ENCODE measurements at regions of chr16 and their contacts with region 1.

Region 1: DNA sequence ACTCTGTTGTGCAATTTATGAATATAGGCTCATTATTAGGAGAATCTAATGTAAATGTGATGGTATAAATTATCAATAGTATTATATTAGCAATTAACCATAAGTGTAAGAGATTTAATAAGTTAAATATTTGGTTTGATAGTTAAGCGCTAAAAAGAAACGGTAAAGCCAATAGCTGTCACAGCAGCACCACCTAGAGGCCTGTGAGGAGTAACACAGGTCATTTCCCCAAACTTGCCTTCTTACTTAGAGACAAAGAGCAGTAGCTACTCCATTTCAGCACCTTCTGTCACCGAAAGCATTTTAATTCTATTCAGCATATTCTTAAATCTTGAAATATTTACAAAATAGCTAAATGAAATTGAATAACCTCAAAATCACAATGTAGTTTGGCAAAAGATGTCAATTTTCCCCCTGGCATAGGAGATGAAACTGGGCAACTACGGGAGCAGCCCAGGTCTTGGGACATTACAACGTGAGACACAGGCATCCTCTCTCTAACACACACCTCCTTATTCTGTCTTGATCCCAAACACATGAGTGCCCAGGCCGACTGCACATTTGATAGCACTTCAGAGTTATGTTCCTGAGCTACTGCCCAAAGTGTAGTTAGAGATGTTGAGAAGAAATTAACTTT is 14.2 kb upstream of the DYNLRB2 start:
- H3K4me3 Mint-ChIP-seq: no peak overlapping the region
- H3K27ac Mint-ChIP-seq: no peak overlapping the region
- H3K4me1 Mint-ChIP-seq: no peaks in the 10 kb centered on the region
- H3K27me3 Mint-ChIP-seq: peaks cover 3% of the 10 kb centered on the region

Region 2: DNA sequence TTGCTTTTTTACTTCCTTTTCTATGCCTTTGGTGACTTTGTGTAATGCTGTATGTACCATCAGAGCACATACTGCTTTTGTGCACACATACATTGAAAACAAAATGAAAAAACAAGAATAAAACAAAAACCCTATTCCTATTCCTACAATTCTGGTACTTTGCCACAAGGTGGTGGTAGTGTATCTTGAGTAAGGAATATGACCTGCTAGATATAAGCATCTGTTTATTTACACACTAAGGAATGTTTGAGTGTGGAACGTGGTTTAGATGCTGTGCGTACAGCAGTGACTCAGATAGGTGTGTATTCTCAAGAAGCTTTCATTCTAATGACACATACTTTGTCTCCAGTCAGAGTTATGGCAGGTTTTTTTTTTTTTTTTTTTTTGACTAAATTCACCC is 1820.8 kb before region 1 on chr16:
- intact Hi-C with region 1: loop called (anchors 5 kb)
- H3K4me3 Mint-ChIP-seq: no peak overlapping the region
- H3K27ac Mint-ChIP-seq: no peak overlapping the region
- H3K4me1 Mint-ChIP-seq: no peaks in the 10 kb centered on the region
- H3K27me3 Mint-ChIP-seq: no peaks in the 10 kb centered on the region

Region 3: GRCh38 chr16:80804056-80804450 is 277.5 kb after region 1 on chr16:
- intact Hi-C with region 1: loop called (anchors 5 kb)
- H3K4me3 Mint-ChIP-seq: peak overlapping the region; percentile 99
- H3K27ac Mint-ChIP-seq: peak overlapping the region; percentile 85
- H3K4me1 Mint-ChIP-seq: peaks cover 23% of the 10 kb centered on the region
- H3K27me3 Mint-ChIP-seq: peaks cover 18% of the 10 kb centered on the region

Region 4: DNA sequence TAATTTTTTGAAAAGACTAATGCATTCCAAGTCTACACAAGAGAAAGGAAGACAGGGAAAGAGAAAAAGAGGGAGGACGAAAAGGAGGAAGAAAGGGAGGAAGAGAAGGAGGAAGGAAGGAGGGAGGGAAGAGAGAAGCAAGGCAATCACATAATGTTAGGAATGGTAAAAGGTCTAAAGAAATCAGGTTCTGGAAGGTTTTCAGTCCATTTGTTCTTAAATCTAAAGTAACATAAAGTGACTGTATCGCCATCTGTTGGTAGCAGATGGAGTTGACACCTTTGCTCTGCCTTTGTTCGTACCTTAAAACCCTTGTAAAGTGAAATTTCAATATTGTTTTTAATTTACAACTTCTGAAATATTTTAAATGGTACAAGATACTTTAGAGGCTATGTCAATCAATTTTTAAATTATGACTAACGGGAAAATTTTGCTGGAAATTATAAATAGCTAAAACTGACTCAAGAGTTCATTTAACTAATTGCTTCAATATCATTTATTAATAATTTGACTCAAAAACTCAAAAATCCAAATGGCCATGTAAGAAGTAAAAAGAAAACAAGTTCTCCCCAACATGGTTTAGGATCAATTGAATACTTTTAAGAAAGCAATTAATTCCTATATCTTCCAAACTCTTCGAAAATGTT is 298.3 kb after region 1 on chr16:
- intact Hi-C with region 1: loop called (anchors 1 kb)
- H3K4me3 Mint-ChIP-seq: no peak overlapping the region
- H3K27ac Mint-ChIP-seq: no peak overlapping the region
- H3K4me1 Mint-ChIP-seq: peaks cover 5% of the 10 kb centered on the region
- H3K27me3 Mint-ChIP-seq: no peaks in the 10 kb centered on the region

Measured in dendritic cell treated with granulocyte-macrophage colony-stimulating factor and Interleukin-4, amounts not matched to agents 40 ng/mL and 50 ng/mL, for 4 days (primary cell).